ENCODE measurements at regions of chr13 and their contacts with region 1.

Region 1: GRCh38 chr13:32354040-32354439 is 38.7 kb downstream of the BRCA2 start:
- DNase-seq: no peak
- H3K4me3 ChIP-seq: no peak overlapping the region
- H3K4me3 Mint-ChIP-seq: no peak overlapping the region
- H3K27ac ChIP-seq: no peak overlapping the region
- H3K27ac Mint-ChIP-seq: no peak overlapping the region
- H3K4me1 ChIP-seq: no peaks in the 10 kb centered on the region
- H3K4me1 Mint-ChIP-seq: no peaks in the 10 kb centered on the region
- H3K27me3 ChIP-seq: no peaks in the 10 kb centered on the region
- H3K27me3 Mint-ChIP-seq: no peaks in the 10 kb centered on the region

Region 2: GRCh38 chr13:32334671-32335070 is 19.4 kb before region 1 on chr13:
- CTCF ChIA-PET with region 1: no interaction called
- POLR2A ChIA-PET with region 1: interaction called, 11 read pairs
- DNase-seq: no peak
- H3K4me3 ChIP-seq: no peak overlapping the region
- H3K4me3 Mint-ChIP-seq: no peak overlapping the region
- H3K27ac ChIP-seq: no peak overlapping the region
- H3K27ac Mint-ChIP-seq: peak overlapping the region in 1 of 8 donors; percentile 29
- H3K4me1 ChIP-seq: no peaks in the 10 kb centered on the region
- H3K4me1 Mint-ChIP-seq: peaks cover 0 to 4% (median 0%) of the 10 kb centered on the region in 3 donors
- H3K27me3 ChIP-seq: no peaks in the 10 kb centered on the region
- H3K27me3 Mint-ChIP-seq: no peaks in the 10 kb centered on the region

Region 3: DNA sequence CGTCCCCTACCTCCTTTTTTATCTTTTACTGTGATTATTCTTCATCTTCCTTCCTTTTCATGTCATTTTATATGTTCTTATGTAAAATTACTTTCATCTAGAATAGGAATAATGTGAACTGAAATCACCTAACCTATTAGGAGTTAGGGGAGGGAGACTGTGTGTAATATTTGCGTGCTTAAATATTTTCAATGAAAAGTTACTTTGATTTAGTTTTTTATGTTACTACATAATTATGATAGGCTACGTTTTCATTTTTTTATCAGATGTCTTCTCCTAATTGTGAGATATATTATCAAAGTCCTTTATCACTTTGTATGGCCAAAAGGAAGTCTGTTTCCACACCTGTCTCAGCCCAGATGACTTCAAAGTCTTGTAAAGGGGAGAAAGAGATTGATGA is 43.9 kb after region 1 on chr13:
- CTCF ChIA-PET with region 1: no interaction called
- POLR2A ChIA-PET with region 1: no interaction called
- DNase-seq: no peak
- H3K4me3 ChIP-seq: no peak overlapping the region
- H3K4me3 Mint-ChIP-seq: no peak overlapping the region
- H3K27ac ChIP-seq: no peak overlapping the region
- H3K27ac Mint-ChIP-seq: no peak overlapping the region
- H3K4me1 ChIP-seq: no peaks in the 10 kb centered on the region
- H3K4me1 Mint-ChIP-seq: peaks cover 0 to 10% (median 1%) of the 10 kb centered on the region in 3 donors
- H3K27me3 ChIP-seq: no peaks in the 10 kb centered on the region
- H3K27me3 Mint-ChIP-seq: no peaks in the 10 kb centered on the region